ENCODE measurements at regions of chr12 and their contacts with region 1.

Region 1: GRCh38 chr12:114499338-114499737 is 93.4 kb upstream of the TBX5 start:
- DNase-seq: no peak
- ATAC-seq: no peak
- H3K4me3 ChIP-seq: no peak overlapping the region
- H3K27ac ChIP-seq: no peak overlapping the region
- H3K4me1 ChIP-seq: no peaks in the 10 kb centered on the region
- H3K27me3 ChIP-seq: peaks cover 12% of the 10 kb centered on the region; the same call in 1 of the 2 replicates
- CTCF ChIP-seq: no peak

Region 2: DNA sequence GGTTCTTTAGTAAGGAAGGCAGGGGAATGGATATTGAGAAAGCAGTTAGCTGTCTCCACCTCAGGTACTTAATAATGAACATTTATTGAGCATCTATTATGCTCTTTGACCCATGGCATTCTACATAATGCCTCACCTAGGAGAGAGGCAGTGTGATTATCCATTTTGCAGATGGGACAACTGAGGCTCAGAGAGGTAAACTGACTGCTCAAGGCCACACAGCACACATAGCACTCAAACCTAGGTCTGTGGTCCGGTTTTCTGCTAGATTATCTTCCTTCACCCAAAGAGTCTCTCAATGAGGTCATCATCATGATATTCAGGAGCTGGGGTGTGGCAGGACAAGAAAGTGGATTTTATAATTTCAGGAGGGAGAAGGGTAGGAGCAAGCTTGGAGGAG is 828.6 kb before region 1 on chr12:
- CTCF ChIA-PET with region 1: interaction called, 11 read pairs
- POLR2A ChIA-PET with region 1: no interaction called
- in situ Hi-C with region 1: no loop called
- intact Hi-C with region 1: no loop called
- DNase-seq: no peak
- ATAC-seq: no peak
- H3K4me3 ChIP-seq: no peak overlapping the region
- H3K27ac ChIP-seq: no peak overlapping the region
- H3K4me1 ChIP-seq: no peaks in the 10 kb centered on the region
- H3K27me3 ChIP-seq: peaks cover 13% of the 10 kb centered on the region
- CTCF ChIP-seq: no peak

Region 3: DNA sequence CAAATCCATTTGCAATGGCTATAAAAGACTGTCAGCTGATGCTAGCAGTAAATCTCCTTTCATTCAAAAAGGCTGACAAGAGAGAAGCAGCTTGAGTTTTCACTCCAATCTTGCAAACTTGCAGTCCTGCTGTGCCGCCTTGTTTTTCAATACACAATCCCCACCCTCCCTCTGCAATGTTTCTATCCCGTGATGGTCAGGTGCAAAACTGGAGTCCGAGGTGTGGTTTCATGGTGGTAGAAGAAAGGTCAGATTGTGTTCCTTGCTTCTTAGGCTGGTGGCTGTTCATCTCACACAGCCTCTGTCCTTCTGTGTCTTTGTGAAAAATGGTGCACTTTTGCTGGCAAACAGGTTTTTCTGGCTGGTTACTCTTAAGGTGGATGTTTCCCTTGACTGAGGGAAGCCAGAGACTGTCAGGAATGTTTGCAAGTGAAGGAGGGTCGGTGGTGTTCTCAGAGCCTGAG is 212.4 kb after region 1 on chr12:
- CTCF ChIA-PET with region 1: no interaction called
- POLR2A ChIA-PET with region 1: no interaction called
- in situ Hi-C with region 1: no loop called
- intact Hi-C with region 1: no loop called
- DNase-seq: no peak
- ATAC-seq: no peak
- H3K4me3 ChIP-seq: no peak overlapping the region
- H3K27ac ChIP-seq: no peak overlapping the region
- H3K4me1 ChIP-seq: no peaks in the 10 kb centered on the region
- H3K27me3 ChIP-seq: no peaks in the 10 kb centered on the region
- CTCF ChIP-seq: no peak